Left cardiac atrium (tissue), 4 donors: ENCODE measurements at regions of chr12 and their contacts with region 1.

Region 1: DNA sequence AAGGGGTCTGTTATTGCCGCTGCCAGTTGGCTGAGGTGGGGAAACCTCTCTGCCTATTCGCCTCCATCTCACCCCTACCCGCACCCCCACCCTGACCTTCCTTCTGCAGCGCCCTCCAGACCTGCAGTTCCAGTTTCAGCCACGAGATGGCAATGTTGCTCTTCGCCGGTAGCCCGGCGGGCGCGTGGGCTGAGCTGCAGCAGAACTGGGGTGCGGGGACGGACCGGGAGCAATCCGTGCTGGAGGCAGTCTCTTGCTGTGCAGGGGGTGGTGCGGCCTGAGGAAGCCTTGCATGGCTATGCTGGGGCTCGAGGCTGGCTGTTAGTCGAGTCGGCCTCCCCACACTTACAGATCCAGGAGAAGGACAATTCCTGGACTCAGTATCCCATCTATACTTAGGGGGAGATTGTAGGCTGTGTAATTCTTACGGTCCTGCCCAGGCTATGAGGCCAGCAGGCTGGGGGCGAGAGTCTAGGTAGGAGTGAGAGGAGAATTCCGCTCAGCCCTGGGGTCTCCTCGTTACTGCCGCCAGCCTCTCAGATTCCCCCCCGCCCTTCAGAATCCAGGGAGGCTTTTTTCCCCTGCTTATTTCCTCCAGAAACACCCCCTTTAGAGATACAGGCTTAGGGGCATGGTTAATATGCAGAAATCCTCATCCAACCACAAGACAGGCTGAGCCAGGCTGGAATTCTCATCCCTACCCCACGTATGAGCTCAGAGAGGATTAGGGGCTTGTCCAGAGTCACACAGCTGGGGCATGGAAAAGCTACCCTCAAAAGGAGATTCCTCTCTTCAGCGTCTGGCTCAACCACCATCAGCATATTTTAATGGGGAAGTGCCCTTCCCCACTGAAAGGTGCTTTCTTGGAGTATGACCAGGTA is 118.2 kb downstream of the AACS start:
- DNase-seq: peak; percentile 78
- ATAC-seq: peak; percentile 63 to 69

Region 2: GRCh38 chr12:125038976-125039625 is 144.3 kb before region 1 on chr12:
- intact Hi-C with region 1: no loop called
- DNase-seq: no peak
- ATAC-seq: no peak

Region 3: DNA sequence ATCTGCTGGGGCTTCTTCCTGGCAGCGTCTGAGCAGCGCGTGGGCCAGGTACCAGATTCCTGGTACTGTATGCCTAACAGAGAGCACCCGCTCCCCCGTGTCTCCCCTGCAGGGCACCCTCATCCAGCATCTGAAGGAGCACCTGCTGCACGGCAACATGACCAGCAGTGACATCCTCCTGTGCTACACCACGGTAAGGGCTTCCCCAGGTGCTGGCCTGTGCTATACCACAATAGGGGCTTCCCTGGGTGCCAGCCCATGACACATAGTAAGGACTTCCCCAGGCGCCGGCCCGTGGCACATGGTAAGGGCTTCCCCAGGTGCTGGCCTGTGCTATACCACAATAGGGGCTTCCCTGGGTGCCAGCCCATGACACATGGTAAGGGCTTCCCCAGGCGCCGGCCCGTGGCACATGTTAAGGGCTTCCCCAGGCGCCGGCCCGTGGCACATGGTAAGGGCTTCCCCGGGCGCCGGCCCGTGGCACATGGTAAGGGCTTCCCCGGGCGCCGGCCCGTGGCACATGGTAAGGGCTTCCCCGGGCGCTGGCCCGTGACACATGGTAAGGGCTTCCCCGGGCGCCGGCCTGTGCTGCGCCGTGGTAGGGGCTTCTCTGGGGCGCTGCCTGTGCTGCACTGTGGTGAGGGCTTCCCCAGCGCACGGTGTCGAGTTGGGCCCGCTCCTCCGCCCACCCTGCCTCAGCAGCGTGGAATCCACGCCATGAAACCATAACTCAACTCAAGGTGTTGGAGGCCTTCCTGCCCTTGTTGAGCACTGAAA is 68.9 kb before region 1 on chr12:
- intact Hi-C with region 1: no loop called
- DNase-seq: no peak
- ATAC-seq: no peak

Region 4: GRCh38 chr12:125402874-125403789 is 219.7 kb after region 1 on chr12:
- intact Hi-C with region 1: loop called (anchors 5 to 10 kb)
- DNase-seq: no peak
- ATAC-seq: no peak

Region 5: DNA sequence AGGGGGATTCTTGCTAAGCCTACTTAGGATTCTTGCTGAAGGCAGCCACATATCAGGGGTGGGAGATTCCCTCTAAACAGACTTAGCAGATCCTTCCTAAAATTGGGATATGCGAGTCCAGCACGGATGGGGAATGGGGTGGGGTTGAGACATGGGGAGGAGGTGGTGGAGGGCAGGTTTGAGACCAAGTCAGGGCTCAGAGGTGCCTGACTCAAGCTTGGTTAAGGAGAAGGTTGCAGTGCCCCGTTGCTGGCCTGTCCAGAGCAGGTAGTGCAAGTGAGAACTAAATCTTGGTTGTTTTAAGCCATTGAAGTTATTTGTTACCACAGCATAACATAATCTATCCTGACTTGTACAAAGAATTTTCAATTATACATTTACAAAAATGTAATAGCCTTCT is 241.5 kb after region 1 on chr12:
- intact Hi-C with region 1: no loop called
- DNase-seq: no peak
- ATAC-seq: no peak

Region 6: DNA sequence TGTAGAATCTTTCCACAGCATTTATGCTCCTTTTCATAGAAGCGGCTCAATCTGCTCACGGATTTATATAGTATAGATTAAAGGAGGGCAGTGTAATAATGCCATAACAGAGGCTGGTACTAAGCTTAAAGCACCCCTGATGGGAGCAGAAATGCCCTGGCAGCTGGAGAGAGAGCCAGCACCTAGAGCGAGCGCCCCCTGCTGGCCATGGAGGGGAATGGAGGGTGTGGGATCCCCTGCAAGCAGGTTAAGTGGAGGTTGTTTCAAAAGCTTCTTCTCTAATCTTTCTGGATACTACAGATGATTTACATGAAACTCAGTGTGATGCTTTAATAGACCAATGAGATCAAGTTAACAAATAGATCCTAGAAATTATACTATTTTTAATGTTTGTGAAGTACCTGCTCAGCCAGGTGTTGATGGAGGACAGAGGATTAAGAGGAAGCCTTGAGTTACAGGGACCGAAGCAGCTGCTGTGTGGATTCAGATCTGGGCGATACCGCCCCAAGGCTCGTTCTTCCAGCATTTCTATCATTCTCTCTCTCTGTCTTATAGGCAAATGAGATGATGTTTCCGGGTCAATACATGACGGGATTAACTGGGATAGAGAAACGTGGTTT is 1564.2 kb after region 1 on chr12:
- intact Hi-C with region 1: loop called in 1 of 2 experiments (anchors 5 kb)
- DNase-seq: peak; percentile 37
- ATAC-seq: peak in 1 of 2 donors; percentile 49

Region 7: GRCh38 chr12:126874427-126875026 is 1691.1 kb after region 1 on chr12:
- intact Hi-C with region 1: loop called in 1 of 2 experiments (anchors 5 kb)
- DNase-seq: peak; percentile 63
- ATAC-seq: peak in 1 of 2 donors; percentile 80